ENCODE measurements at regions of chr12 and their contacts with region 1.

Region 1: DNA sequence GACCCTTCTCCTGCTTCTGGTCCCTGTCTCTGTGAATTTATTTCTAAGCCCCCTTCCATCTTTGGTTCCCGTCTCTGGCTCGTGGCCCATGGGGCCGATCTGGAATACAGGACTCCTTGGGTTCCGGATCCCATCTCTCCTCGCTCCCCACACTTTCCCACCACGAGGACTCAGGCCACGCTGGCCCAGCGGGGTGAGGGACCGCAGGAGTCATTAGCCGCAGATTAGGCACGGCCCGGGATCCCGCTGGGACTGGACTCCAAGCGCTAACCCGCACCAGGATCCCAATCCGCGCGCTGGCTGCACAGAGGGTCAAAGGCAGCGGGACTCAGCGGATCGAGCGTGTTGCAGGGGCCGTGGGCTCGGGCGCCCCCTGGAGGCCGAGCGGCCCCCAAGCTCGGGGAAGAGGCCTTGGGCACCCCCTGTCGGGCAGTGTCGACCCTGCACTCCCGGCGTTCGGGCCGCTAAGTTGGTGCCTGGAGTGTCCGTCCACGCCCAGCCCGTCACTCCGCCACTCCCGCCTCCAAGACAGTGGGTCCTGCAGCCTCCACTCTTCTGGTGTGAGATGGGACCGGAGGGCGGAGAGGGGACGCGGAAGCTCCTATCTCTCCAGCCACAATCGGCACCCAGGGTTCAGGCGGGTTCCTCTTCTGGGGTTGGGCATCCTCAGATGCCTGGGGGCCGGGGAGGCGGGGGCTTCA is 9.5 kb downstream of the SHMT2 start:
- DNase-seq: peak; percentile 86 to 93
- H3K4me3 ChIP-seq: peak overlapping the region; percentile 47 to 60
- H3K27ac ChIP-seq: peak overlapping the region in 1 of 2 donors; percentile 95
- H3K4me1 ChIP-seq: peaks cover 11 to 94% (median 86%) of the 10 kb centered on the region in 4 donors
- H3K27me3 ChIP-seq: peaks cover 7 to 51% of the 10 kb centered on the region in 2 donors
- CTCF ChIP-seq: peak; percentile 100

Region 2: DNA sequence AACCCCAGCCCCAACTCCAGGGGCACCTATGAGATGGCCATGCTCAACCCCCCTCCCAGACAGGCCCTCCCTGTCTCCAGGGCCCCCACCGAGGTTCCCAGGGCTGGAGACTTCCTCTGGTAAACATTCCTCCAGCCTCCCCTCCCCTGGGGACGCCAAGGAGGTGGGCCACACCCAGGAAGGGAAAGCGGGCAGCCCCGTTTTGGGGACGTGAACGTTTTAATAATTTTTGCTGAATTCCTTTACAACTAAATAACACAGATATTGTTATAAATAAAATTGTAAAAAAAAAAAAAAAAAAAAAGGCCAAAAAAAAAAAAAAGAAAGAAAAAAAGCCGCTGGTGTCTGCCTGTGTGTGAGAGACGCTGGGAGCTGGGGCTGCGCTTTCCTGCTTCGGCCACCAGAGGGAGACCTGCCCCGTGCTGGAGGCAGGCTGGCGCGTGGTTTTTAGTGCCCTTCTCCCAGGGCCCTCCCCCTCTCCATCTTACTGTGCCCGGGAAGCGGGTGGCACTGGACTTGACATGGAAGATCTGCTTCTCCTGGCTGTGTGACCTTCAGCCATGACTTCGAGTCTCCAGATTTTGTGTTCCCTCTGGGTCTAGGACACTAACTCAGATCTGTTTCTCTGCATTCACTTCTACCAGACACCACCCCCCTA is 25.8 kb before region 1 on chr12:
- intact Hi-C with region 1: loop called (anchors 1 kb)
- DNase-seq: peak; percentile 93 to 96
- H3K4me3 ChIP-seq: no peak overlapping the region
- H3K27ac ChIP-seq: peak overlapping the region; percentile 65 to 72
- H3K4me1 ChIP-seq: peaks cover 0 to 54% (median 42%) of the 10 kb centered on the region in 4 donors
- H3K27me3 ChIP-seq: peaks cover 5 to 35% of the 10 kb centered on the region in 2 donors
- CTCF ChIP-seq: peak; percentile 86 to 97